Panc1 (cell line): ENCODE measurements at regions of chr11 and their contacts with region 1.

Region 1: GRCh38 chr11:126046570-126047195 is 16.0 kb downstream of the CDON start:
- DNase-seq: no peak
- ATAC-seq: no peak
- H3K4me3 ChIP-seq: no peak overlapping the region
- H3K27ac ChIP-seq: no peak overlapping the region
- H3K4me1 ChIP-seq: no peaks in the 10 kb centered on the region
- H3K27me3 ChIP-seq: no peaks in the 10 kb centered on the region
- CTCF ChIP-seq: no peak

Region 2: GRCh38 chr11:125846188-125846587 is 200.5 kb before region 1 on chr11:
- CTCF ChIA-PET with region 1: no interaction called
- POLR2A ChIA-PET with region 1: no interaction called
- in situ Hi-C with region 1: no loop called
- intact Hi-C with region 1: no loop called
- DNase-seq: no peak
- ATAC-seq: no peak
- H3K4me3 ChIP-seq: no peak overlapping the region
- H3K27ac ChIP-seq: no peak overlapping the region
- H3K4me1 ChIP-seq: no peaks in the 10 kb centered on the region
- H3K27me3 ChIP-seq: no peaks in the 10 kb centered on the region
- CTCF ChIP-seq: no peak

Region 3: GRCh38 chr11:126024123-126024522 is 22.6 kb before region 1 on chr11:
- CTCF ChIA-PET with region 1: no interaction called
- POLR2A ChIA-PET with region 1: interaction called, 11 read pairs
- in situ Hi-C with region 1: no loop called
- intact Hi-C with region 1: no loop called
- DNase-seq: no peak
- ATAC-seq: no peak
- H3K4me3 ChIP-seq: no peak overlapping the region
- H3K27ac ChIP-seq: no peak overlapping the region
- H3K4me1 ChIP-seq: no peaks in the 10 kb centered on the region
- H3K27me3 ChIP-seq: no peaks in the 10 kb centered on the region
- CTCF ChIP-seq: no peak